CD8-positive, alpha-beta T cell (primary cell): ENCODE measurements at regions of chr13 and their contacts with region 1.

Region 1: DNA sequence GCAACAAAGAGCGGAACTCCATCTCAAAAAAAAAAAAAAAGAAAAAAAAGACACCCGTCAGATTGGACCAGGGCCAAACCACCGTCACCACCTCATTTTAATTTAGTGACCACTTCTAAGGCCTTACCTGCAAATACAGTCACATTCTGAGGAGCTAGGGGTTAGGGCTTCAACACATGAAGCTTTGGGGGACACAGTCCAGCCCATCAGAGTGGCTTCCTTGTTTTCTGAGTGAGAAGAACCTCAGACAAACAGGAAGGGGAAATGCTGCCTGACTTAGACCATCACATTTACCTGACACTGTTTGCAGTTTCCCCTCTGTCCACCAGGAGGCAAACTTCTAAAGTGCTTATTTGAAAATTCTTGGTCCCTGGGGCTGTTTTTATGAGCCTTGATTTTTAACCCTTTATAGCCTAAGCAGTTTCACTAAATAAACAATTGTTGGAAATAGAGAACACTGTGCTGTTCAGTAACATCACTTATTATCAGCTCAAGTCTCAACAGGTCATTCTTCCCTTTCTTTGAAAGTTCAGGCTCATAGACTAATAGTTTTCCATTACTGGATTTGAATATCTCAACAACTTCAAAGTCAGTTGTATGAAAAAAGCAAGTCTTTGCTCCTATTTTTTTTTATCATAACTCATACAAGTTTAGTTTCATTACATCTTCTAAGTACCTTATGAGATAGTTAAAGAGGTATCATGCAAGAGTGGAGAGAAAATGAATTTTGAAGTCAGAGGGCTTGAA is 74.9 kb upstream of the WASF3 start:
- DNase-seq: peak; percentile 21 to 89 (median 72)
- ATAC-seq: peak; percentile 98
- H3K4me3 ChIP-seq: no peak overlapping the region
- H3K4me3 Mint-ChIP-seq: peak overlapping the region; percentile 39
- H3K27ac ChIP-seq: peak overlapping the region in 1 of 2 experiments; percentile 11
- H3K27ac Mint-ChIP-seq: peak overlapping the region; percentile 55
- H3K4me1 ChIP-seq: peaks cover 23% of the 10 kb centered on the region
- H3K4me1 Mint-ChIP-seq: peaks cover 13% of the 10 kb centered on the region
- H3K27me3 ChIP-seq: no peaks in the 10 kb centered on the region
- H3K27me3 Mint-ChIP-seq: no peaks in the 10 kb centered on the region
- CTCF ChIP-seq: peak; percentile 85

Region 2: DNA sequence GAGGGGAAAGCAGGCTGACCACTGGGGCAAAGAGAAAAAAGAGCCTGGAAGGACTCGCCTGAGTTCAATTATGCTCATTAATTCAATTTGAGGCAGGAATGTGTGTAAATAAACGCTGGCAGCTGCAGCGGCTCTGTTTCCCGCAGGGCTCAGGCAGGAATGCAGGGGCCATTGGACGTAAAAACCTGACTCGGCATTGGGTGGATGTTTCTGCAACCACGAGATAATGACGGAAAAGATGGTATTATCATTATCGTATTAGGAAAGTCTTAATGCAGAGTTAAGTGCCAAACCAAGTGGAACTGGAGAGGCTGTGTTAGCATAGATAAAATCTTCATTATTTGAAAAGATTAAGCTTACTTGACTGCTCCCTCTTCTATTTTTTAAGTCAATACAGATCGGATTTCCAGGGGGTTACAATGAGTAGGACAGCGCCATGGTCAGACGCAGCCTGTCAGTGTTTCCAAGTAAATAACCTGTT is 600.6 kb before region 1 on chr13:
- CTCF ChIA-PET with region 1: no interaction called
- POLR2A ChIA-PET with region 1: no interaction called
- intact Hi-C with region 1: no loop called
- DNase-seq: no peak
- ATAC-seq: no peak
- H3K4me3 ChIP-seq: no peak overlapping the region
- H3K4me3 Mint-ChIP-seq: no peak overlapping the region
- H3K27ac ChIP-seq: no peak overlapping the region
- H3K27ac Mint-ChIP-seq: no peak overlapping the region
- H3K4me1 ChIP-seq: peaks cover 52% of the 10 kb centered on the region
- H3K4me1 Mint-ChIP-seq: peaks cover 74% of the 10 kb centered on the region
- H3K27me3 ChIP-seq: no peaks in the 10 kb centered on the region
- H3K27me3 Mint-ChIP-seq: no peaks in the 10 kb centered on the region
- CTCF ChIP-seq: no peak

Region 3: GRCh38 chr13:26498656-26499591 is 16.3 kb after region 1 on chr13:
- CTCF ChIA-PET with region 1: interaction called, 13 read pairs
- POLR2A ChIA-PET with region 1: no interaction called
- intact Hi-C with region 1: no loop called
- DNase-seq: no peak
- ATAC-seq: no peak
- H3K4me3 ChIP-seq: no peak overlapping the region
- H3K4me3 Mint-ChIP-seq: no peak overlapping the region
- H3K27ac ChIP-seq: no peak overlapping the region
- H3K27ac Mint-ChIP-seq: no peak overlapping the region
- H3K4me1 ChIP-seq: no peaks in the 10 kb centered on the region
- H3K4me1 Mint-ChIP-seq: peaks cover 4% of the 10 kb centered on the region
- H3K27me3 ChIP-seq: no peaks in the 10 kb centered on the region
- H3K27me3 Mint-ChIP-seq: peaks cover 11% of the 10 kb centered on the region
- CTCF ChIP-seq: no peak